A549 (cell line): ENCODE measurements at regions of chr12 and their contacts with region 1.

Region 1: DNA sequence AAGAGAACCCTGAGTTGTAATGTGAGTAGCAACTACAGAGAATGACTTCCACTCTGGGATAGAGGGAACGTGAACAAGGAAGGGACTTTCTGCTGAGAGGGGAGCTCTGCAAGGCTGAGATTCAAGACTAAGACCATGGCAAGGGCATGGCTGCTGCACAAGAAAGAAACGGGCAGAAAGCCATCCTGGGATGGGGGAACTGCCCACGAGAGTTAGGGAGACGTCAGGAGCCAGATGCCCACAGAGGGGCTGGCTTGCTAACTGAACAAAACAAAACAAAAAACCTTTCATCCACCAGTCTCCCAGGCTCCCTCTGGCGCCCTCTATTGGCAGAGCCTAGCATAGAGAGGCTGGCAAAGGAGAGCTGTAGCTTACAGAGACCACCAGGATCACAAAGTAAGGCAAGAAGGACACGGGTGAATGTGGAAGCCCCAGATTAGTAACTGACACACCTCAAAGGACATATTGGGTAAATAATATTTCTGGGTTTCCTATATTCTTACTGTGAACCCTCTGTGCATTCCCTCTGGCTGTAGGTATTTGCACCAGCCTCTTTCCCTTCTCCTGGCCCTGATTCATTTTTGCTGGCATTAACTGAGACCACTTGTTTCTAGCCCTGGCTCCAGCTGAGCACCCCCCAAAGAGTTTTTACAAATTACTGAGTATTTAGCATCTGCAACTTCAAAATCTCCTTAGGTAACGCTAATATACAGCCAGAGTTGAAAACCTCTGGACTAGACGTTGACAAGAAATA is 338.3 kb downstream of the EMP1 start:
- DNase-seq: peak; percentile 31 to 60
- ATAC-seq: peak; percentile 57 to 82; a peak in 5 of 6 replicates
- H3K4me3 ChIP-seq: no peak overlapping the region
- H3K27ac ChIP-seq: 0 out of 6 replicates have a peak overlapping the region, but pooled peaks of 1 of the 2 experiments have one; percentile 36
- H3K4me1 ChIP-seq: no peaks in the 10 kb centered on the region
- CTCF ChIP-seq: peak; percentile 89
- EP300 ChIP-seq: no peak
- POLR2A ChIP-seq: no peak
- RAD21 ChIP-seq: peak; percentile 71 to 75

Region 2: GRCh38 chr12:13278249-13278787 is 256.5 kb before region 1 on chr12:
- CTCF ChIA-PET with region 1: interaction called, 17 read pairs
- POLR2A ChIA-PET with region 1: interaction called, 3 read pairs
- DNase-seq: peak; percentile 69 to 82
- ATAC-seq: peak; percentile 94 to 98
- H3K4me3 ChIP-seq: no peak overlapping the region
- H3K27ac ChIP-seq: peak overlapping the region; percentile 40 to 47; a peak in 3 of 6 replicates
- H3K4me1 ChIP-seq: no peaks in the 10 kb centered on the region
- CTCF ChIP-seq: peak; percentile 95
- EP300 ChIP-seq: no peak
- POLR2A ChIP-seq: no peak
- RAD21 ChIP-seq: peak; percentile 90 to 93

Region 3: GRCh38 chr12:13362260-13362841 is 172.5 kb before region 1 on chr12:
- CTCF ChIA-PET with region 1: interaction called, 14 read pairs
- POLR2A ChIA-PET with region 1: no interaction called
- DNase-seq: peak; percentile 60 to 81
- ATAC-seq: peak; percentile 94 to 100
- H3K4me3 ChIP-seq: no peak overlapping the region
- H3K27ac ChIP-seq: no peak overlapping the region
- H3K4me1 ChIP-seq: no peaks in the 10 kb centered on the region
- CTCF ChIP-seq: peak; percentile 72
- EP300 ChIP-seq: no peak
- POLR2A ChIP-seq: no peak
- RAD21 ChIP-seq: peak; percentile 77 to 85

Region 4: GRCh38 chr12:13523536-13524307 is 11.1 kb before region 1 on chr12:
- CTCF ChIA-PET with region 1: interaction called, 15 read pairs
- POLR2A ChIA-PET with region 1: no interaction called
- DNase-seq: no peak
- ATAC-seq: peak in 1 of 2 experiments; percentile 23; a peak in 1 of 6 replicates
- H3K4me3 ChIP-seq: no peak overlapping the region
- H3K27ac ChIP-seq: no peak overlapping the region
- H3K4me1 ChIP-seq: peaks cover 18% of the 10 kb centered on the region
- CTCF ChIP-seq: no peak
- EP300 ChIP-seq: no peak
- POLR2A ChIP-seq: no peak
- RAD21 ChIP-seq: no peak

Region 5: DNA sequence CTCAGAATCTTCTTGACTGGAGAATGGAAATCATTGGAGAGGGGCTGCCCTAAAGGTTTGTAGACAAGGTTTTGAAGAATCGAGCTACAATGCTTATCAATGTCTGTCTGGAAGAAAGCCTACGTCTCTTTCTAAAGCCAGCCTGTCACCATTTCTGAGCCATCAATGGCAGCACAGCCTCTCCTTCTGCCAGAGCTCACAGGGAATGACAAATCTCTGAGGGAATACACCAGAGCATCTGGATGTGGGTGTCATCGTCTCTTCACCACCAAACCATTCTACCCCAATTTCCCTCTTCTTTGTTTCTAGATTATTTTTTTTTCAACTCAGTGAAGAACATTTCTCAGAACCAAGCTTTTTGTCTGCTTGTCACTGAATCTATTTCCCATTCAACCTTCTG is 11.4 kb after region 1 on chr12:
- CTCF ChIA-PET with region 1: interaction called, 38 read pairs
- POLR2A ChIA-PET with region 1: no interaction called
- DNase-seq: no peak
- ATAC-seq: no peak
- H3K4me3 ChIP-seq: no peak overlapping the region
- H3K27ac ChIP-seq: no peak overlapping the region
- H3K4me1 ChIP-seq: peaks cover 6% of the 10 kb centered on the region; the same call in 2 of the 3 replicates
- CTCF ChIP-seq: no peak
- EP300 ChIP-seq: no peak
- POLR2A ChIP-seq: no peak
- RAD21 ChIP-seq: no peak

Region 6: DNA sequence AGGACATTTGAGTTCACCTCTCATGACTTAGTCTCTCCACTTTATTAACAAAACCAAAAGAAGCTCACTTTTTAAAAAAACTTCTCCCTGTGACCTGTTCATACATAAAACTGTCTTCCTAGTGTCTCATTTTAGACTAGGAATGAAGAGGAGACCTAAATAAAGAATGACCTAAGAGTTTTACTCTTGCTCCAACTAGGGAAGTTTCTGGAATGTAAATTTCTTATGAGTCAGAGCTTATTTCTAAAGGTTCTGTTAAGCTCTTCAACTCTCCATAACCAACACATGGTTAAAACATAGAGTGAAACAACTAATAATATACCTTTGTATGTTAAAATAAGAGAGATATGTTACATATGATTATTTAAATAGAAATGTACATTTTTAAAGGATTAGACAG is 31.5 kb after region 1 on chr12:
- CTCF ChIA-PET with region 1: interaction called, 11 read pairs
- POLR2A ChIA-PET with region 1: no interaction called
- DNase-seq: no peak
- ATAC-seq: no peak
- H3K4me3 ChIP-seq: no peak overlapping the region
- H3K27ac ChIP-seq: no peak overlapping the region
- H3K4me1 ChIP-seq: peaks cover 5% of the 10 kb centered on the region; the same call in 1 of the 3 replicates
- CTCF ChIP-seq: no peak
- EP300 ChIP-seq: no peak
- POLR2A ChIP-seq: no peak
- RAD21 ChIP-seq: no peak